ENCODE measurements at regions of chr3 and their contacts with region 1.

Region 1: DNA sequence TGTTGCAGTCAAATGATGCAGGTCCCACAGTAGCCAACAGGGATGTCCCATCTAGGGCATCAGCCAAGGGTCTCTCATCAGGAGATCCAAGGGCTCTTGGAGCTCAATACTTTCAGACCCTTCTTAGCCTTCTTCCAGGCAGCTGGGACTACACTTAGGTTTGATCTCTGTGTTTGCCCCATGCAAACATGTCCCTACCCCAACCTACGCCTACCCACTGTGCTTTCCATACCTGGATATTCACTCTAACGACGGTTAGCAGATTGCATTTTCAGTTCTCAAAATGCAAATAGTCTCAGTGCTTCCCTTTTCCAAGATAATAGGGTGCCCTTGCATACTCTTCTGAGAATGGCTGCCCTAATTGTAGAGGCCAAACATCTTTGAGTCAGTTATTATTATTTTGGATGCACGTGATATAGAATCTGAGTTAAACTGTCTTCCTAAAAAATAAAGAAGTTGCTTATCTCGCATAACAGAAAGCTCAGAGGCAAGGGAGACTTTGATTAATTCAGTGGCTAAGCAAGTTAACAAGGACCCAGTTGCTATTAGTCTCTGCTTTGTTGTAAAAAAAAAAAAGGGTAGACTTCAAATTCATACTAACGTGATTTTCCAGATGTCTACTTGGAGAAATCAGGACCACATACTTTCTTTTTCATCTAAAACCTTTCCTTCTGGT is 1.0 kb upstream of the CEP70 start:
- DNase-seq: no peak
- H3K4me3 ChIP-seq: peak overlapping the region; percentile 86
- H3K27ac ChIP-seq: peak overlapping the region; percentile 91
- H3K4me1 ChIP-seq: peaks cover 21% of the 10 kb centered on the region
- H3K27me3 ChIP-seq: no peaks in the 10 kb centered on the region
- CTCF ChIP-seq: no peak

Region 2: GRCh38 chr3:138923531-138923994 is 328.5 kb after region 1 on chr3:
- intact Hi-C with region 1: loop called (anchors 5 kb)
- DNase-seq: peak; percentile 74
- H3K4me3 ChIP-seq: no peak overlapping the region
- H3K27ac ChIP-seq: no peak overlapping the region
- H3K4me1 ChIP-seq: no peaks in the 10 kb centered on the region
- H3K27me3 ChIP-seq: peaks cover 3% of the 10 kb centered on the region
- CTCF ChIP-seq: peak; percentile 94